ENCODE measurements at regions of chr19 and their contacts with region 1.

Region 1: DNA sequence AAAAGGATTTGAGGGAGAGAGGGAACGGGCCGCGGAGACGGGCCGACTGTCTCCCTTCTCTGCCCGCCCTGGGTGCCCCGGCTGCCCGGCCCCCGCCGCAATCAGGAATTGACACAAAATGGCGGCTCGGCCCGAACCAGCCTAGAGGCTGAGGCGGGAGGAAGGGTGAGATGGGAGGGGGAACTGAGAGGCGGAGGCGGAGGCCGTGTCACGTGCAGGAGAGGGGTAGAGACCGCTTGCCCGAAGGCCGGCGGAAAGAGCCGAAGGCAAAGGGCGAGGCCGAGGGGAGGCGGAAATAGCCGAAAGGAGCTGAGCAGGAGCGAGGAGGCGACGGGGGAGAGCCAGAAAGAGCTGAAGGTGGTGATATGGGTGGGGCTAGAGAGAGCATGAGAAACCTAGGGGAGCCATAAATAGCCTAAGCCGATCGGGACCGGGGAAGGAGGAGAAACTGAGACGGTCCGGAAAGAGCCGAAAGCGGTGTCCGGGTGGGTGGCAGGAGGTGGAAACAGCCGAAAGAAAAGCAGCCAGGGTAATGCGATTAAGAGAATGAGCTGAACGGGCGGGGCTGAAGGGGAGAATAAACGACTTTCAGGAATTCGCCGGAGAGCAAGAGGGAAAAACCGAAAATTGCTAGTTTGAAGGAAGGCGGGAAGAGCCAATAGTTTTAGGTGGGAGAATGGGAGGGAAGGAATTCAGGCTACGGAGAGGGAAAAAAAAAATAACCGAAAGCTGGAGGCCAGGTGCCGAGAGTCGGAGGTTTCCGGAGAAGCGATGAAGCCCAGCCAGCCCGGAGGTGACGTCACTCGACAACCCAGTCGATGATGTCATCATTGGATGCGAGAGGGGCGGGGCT is at the start of gene ZC3H4:
- DNase-seq: peak; percentile 100
- ATAC-seq: peak; percentile 91
- H3K4me3 Mint-ChIP-seq: peak within 1 kb of the TSS; percentile 93
- H3K27ac Mint-ChIP-seq: peak within 1 kb of the TSS; percentile 100
- H3K4me1 Mint-ChIP-seq: peaks cover 24% of the 10 kb centered on the region
- H3K27me3 Mint-ChIP-seq: no peaks in the 10 kb centered on the region
- total RNA-seq, gene ZC3H4: 88.6 to 128 TPM

Region 2: DNA sequence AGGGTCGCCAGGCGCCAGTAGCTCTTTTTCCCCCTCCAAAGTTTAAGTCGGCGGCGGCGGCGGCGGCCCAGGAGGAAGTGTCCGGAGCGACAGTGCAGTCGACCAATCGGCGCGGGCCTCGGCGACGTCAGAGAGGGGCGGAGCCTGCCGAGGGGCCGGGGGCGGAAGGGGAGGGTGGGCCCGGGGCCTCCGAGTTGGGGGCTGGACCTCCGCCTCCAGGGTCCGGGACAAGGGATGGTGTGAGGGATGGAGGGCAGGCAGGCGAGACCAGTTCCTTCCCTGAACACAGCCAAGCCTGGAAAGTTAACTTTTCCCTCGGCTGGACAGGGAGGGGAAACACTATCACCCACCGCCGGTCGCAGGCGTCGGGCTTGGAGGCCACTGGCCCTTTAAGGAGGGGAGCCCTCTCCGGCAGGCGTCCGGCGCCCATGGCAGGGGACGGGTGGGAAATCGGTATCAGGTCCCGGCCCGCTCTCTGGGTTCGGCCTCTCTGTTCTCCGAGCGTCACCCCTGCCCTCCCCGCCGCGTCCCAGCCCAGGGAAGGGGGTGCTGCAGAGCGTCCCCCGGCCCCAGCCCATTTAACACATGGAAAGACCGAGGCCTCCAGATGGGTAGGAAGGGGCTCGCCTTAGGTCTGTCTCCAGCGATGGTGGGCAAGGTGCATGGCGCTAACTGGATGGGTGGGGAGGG is 396.0 kb before region 1 on chr19 and contains the start of gene PRKD2:
- CTCF ChIA-PET with region 1: no interaction called
- POLR2A ChIA-PET with region 1: no interaction called
- intact Hi-C with region 1: loop called in 1 of 2 experiments (anchors 5 kb)
- DNase-seq: peak; percentile 95
- ATAC-seq: peak; percentile 66
- H3K4me3 Mint-ChIP-seq: peak within 1 kb of the TSS; percentile 94
- H3K27ac Mint-ChIP-seq: peak within 1 kb of the TSS; percentile 95
- H3K4me1 Mint-ChIP-seq: peaks cover 40% of the 10 kb centered on the region
- H3K27me3 Mint-ChIP-seq: no peaks in the 10 kb centered on the region
- total RNA-seq, gene PRKD2: 76.0 to 78.3 TPM

Region 3: GRCh38 chr19:47075179-47075810 is 37.9 kb before region 1 on chr19:
- CTCF ChIA-PET with region 1: interaction called, 10 read pairs
- POLR2A ChIA-PET with region 1: interaction called, 7 read pairs
- intact Hi-C with region 1: no loop called
- DNase-seq: no peak
- ATAC-seq: no peak
- H3K4me3 Mint-ChIP-seq: no peak overlapping the region
- H3K27ac Mint-ChIP-seq: no peak overlapping the region
- H3K4me1 Mint-ChIP-seq: peaks cover 3% of the 10 kb centered on the region
- H3K27me3 Mint-ChIP-seq: no peaks in the 10 kb centered on the region

Region 4: GRCh38 chr19:47225746-47226425 is 112.7 kb after region 1 on chr19:
- CTCF ChIA-PET with region 1: no interaction called
- POLR2A ChIA-PET with region 1: interaction called, 10 read pairs
- intact Hi-C with region 1: loop called in 1 of 2 experiments (anchors 1 kb)
- DNase-seq: peak; percentile 93
- ATAC-seq: peak; percentile 70
- H3K4me3 Mint-ChIP-seq: peak overlapping the region; percentile 77
- H3K27ac Mint-ChIP-seq: no peak overlapping the region
- H3K4me1 Mint-ChIP-seq: peaks cover 16% of the 10 kb centered on the region
- H3K27me3 Mint-ChIP-seq: no peaks in the 10 kb centered on the region

Region 5: GRCh38 chr19:47483800-47484690 is 370.8 kb after region 1 on chr19 and contains the start of gene KPTN:
- CTCF ChIA-PET with region 1: no interaction called
- POLR2A ChIA-PET with region 1: no interaction called
- intact Hi-C with region 1: loop called in 1 of 2 experiments (anchors 2 kb)
- DNase-seq: peak; percentile 95
- ATAC-seq: peak; percentile 90
- H3K4me3 Mint-ChIP-seq: peak within 1 kb of the TSS; percentile 92
- H3K27ac Mint-ChIP-seq: peak within 1 kb of the TSS; percentile 98
- H3K4me1 Mint-ChIP-seq: peaks cover 27% of the 10 kb centered on the region
- H3K27me3 Mint-ChIP-seq: no peaks in the 10 kb centered on the region
- total RNA-seq, gene KPTN: 9.7 to 10.5 TPM

Region 6: DNA sequence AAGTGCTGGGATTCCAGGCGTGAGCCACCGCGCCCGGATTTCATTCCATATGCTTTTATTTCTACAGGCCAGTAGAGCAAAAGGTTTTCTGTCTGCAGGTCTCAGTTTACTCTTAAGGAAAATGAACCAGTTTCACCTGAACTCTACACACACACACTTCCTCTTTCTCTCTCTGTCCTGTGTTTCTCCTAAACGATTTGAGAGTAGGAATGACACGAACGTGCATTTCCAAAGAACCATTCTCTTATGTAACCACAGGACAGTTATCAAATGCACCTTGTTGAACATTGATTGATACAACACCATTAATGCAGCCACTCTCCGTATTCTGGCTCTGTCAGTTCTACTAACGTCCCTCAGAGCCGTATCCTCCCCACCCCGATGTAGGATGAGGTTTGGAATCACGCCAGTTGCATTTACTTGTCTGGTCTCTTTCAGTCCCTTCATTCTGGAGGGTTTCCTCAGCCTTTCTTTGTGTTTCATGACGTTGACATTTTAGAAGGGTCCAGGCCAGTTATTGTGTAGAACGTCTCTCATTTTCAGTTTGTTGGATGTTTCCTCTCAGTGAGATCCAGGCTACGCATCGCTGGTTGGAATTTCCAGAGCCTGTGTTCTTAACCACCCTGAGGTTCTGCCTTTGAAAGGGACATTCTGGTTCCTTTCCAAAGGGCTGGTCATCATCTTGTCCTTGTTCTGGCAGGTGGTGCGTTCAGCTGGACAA is 531.7 kb after region 1 on chr19:
- CTCF ChIA-PET with region 1: no interaction called
- POLR2A ChIA-PET with region 1: no interaction called
- intact Hi-C with region 1: no loop called
- DNase-seq: no peak
- ATAC-seq: no peak
- H3K4me3 Mint-ChIP-seq: no peak overlapping the region
- H3K27ac Mint-ChIP-seq: no peak overlapping the region
- H3K4me1 Mint-ChIP-seq: peaks cover 24% of the 10 kb centered on the region
- H3K27me3 Mint-ChIP-seq: no peaks in the 10 kb centered on the region

Region 7: DNA sequence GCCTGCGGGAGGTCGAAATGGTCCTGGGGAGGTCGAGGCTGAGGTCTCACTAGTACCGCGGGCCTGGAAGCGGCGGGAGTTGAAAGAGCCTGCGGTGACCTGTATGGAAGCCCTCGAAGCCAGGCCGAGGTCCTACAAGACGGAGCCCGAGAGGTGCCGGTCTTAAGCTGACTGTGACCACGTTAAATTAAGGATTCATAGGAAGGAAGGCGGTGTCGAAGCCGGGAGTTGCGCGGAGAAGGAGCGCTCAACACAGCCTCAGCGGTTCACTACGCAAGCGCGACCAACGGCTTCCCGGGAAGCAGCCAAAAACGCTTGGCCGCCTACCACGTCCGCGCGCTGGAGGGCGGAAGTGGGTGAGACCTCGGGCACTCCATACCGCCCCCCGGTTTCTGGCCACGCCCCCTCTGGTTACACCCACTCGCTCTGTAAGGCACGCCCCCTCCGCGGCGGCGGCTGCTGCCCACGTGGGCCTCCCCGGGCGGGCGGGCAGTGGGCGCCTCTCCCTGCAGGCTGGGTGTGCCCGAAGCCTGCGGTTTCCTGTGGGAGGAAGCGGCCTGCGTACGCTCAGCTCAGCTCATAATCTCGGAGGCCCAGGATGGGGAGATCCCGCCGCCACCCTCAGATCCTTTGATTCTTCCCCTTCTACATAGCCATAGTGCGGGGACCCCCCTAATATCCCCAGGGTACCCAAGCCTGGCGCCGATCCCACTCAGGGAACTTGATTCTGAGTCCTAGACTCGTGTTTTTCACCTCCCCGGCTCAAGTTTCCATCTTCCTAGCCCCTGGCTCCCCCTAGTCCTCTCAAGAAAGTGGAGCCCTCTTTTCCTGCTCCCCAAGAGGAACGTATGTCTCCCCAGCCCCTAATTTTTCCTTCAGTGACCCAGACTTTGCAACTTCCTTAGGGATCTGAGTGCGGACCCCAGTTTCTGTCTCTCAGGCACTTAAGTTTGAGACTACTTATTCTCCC is 1208.7 kb after region 1 on chr19:
- CTCF ChIA-PET with region 1: no interaction called
- POLR2A ChIA-PET with region 1: no interaction called
- intact Hi-C with region 1: loop called in 1 of 2 experiments (anchors 10 kb)
- DNase-seq: peak; percentile 99
- ATAC-seq: peak; percentile 68
- H3K4me3 Mint-ChIP-seq: peak overlapping the region; percentile 82
- H3K27ac Mint-ChIP-seq: peak overlapping the region; percentile 97
- H3K4me1 Mint-ChIP-seq: peaks cover 56% of the 10 kb centered on the region
- H3K27me3 Mint-ChIP-seq: no peaks in the 10 kb centered on the region